ENCODE measurements at regions of chr3 and their contacts with region 1.

Region 1: DNA sequence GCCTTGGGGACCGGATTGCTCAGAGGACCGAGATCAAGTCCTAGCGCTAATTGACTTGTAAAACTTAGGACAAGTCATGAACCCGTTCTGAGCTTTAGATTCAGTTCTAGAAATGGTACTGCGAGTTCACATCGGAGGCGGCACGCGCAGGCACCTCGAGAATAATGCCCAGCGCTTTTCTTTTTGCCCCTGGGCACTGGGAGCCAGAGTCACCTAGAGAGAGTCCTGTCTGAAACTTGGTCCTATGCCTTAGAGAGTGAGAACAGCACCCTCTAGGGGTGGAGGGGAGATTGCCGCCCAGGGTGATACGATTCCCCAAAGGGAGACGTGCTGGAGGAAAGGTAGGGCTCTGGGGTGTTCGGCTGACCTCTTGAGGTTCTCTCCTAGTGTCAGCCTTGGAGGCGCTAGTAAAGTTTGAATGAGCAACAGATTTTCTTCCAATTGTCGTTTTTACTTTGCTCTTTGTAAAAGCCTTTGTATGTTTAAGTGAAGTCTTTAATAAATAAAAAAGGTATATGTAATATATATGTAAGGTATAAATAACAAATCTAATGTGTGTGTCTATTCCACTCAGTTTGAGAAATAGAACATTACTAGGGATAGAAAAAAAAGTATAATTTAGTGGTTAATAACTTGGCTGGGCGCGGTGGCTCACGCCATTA is 826 bp downstream of the EEF1AKMT4 start:
- DNase-seq: peak; percentile 90
- ATAC-seq: peak; percentile 81
- H3K4me3 ChIP-seq: peak overlapping the region; percentile 76 to 89 (median 80)
- H3K27ac ChIP-seq: peak overlapping the region; percentile 93
- H3K4me1 ChIP-seq: peaks cover 20% of the 10 kb centered on the region
- H3K27me3 ChIP-seq: peaks cover 0 to 4% of the 10 kb centered on the region in 2 experiments; a peak in 1 of 5 replicates
- CTCF ChIP-seq: peak; percentile 92
- EP300 ChIP-seq: no peak
- POLR2A ChIP-seq: no peak
- RAD21 ChIP-seq: peak; percentile 40

Region 2: DNA sequence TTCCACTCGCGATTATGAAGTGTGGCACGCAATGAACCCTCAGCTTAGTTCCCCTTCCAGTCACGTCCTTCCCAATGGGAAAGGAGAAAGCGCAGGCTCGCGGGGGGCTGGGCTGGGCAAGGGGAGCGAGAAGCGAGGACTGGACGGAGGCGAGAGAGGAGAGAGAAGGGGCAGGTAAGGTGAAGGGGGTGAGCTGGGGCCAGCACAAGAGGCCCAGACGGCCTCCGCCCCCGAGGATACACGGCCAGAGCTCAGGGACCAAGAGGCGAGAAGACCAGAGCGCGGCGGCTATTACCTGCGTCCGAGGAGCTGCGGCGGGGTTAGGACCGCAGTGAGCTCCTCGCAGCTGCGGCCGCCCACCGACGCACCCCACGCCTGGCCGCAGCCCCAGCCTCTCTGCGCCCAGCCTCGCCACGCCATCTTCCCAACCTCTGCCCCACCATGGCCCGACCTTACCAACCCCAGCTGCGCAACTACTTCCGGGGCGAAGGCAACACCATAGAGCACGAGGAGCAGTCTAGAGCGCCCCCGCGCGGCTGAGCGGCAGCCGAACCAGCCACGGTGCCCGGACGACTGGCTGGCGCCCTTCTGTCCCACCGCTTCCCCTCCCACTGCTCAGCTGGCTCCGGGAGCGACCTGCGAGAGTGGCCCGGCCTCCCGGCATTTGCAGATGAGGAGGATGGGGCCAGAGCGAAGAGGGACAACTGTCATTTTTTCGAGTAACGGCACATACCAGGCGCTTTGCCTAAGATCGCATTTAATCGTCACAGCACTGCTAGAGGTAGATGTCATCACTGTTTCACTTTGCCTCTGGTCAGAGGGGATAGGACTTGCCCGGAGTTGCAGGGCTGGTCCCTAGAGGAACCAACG is 365.6 kb before region 1 on chr3 and contains the start of gene PARL:
- CTCF ChIA-PET with region 1: no interaction called
- POLR2A ChIA-PET with region 1: interaction called, 5 read pairs
- in situ Hi-C with region 1: no loop called
- intact Hi-C with region 1: loop called (anchors 5 kb)
- DNase-seq: peak; percentile 91
- ATAC-seq: peak; percentile 99
- H3K4me3 ChIP-seq: peak within 1 kb of the TSS; percentile 84 to 89 (median 84)
- H3K27ac ChIP-seq: peak within 1 kb of the TSS; percentile 71
- H3K4me1 ChIP-seq: peaks cover 22% of the 10 kb centered on the region; the same call in 1 of the 2 replicates
- H3K27me3 ChIP-seq: no peaks in the 10 kb centered on the region; a peak in 1 of 5 replicates
- CTCF ChIP-seq: peak; percentile 99
- EP300 ChIP-seq: peak in 1 of 2 experiments; percentile 61; a peak in 1 of 4 replicates
- POLR2A ChIP-seq: peak; percentile 90 to 94
- RAD21 ChIP-seq: peak; percentile 82
- total RNA-seq, gene PARL: 58.6 and 60.5 TPM in 2 replicates

Region 3: GRCh38 chr3:184017672-184018423 is 232.4 kb before region 1 on chr3 and contains the start of gene ABCC5:
- CTCF ChIA-PET with region 1: no interaction called
- POLR2A ChIA-PET with region 1: no interaction called
- in situ Hi-C with region 1: no loop called
- intact Hi-C with region 1: loop called (anchors 10 kb)
- DNase-seq: peak; percentile 85
- ATAC-seq: peak; percentile 99
- H3K4me3 ChIP-seq: peak within 1 kb of the TSS; percentile 73 to 97 (median 79)
- H3K27ac ChIP-seq: peak within 1 kb of the TSS; percentile 30
- H3K4me1 ChIP-seq: peaks cover 32% of the 10 kb centered on the region
- H3K27me3 ChIP-seq: no peaks in the 10 kb centered on the region
- CTCF ChIP-seq: peak; percentile 42; the same call in 1 of the 2 replicates
- EP300 ChIP-seq: no peak
- POLR2A ChIP-seq: peak; percentile 31 to 89; a peak in 2 of 4 replicates
- RAD21 ChIP-seq: 0 out of 2 replicates have a peak, but pooled peaks have one; percentile 1
- total RNA-seq, gene ABCC5: 7.8 and 12.7 TPM in 2 replicates

Region 4: GRCh38 chr3:184154885-184155643 is 95.2 kb before region 1 on chr3 and contains the start of gene DVL3:
- CTCF ChIA-PET with region 1: no interaction called
- POLR2A ChIA-PET with region 1: no interaction called
- in situ Hi-C with region 1: loop called (anchors 5 kb)
- intact Hi-C with region 1: loop called (anchors 2 kb)
- DNase-seq: peak; percentile 50
- ATAC-seq: peak; percentile 68
- H3K4me3 ChIP-seq: peak within 1 kb of the TSS; percentile 77 to 100 (median 99)
- H3K27ac ChIP-seq: peak within 1 kb of the TSS; percentile 96
- H3K4me1 ChIP-seq: peaks cover 37% of the 10 kb centered on the region
- H3K27me3 ChIP-seq: no peaks in the 10 kb centered on the region; a peak in 1 of 5 replicates
- CTCF ChIP-seq: no peak; the same call in 1 of the 2 replicates
- EP300 ChIP-seq: no peak
- POLR2A ChIP-seq: peak in 1 of 2 experiments; percentile 60; a peak in 2 of 4 replicates
- RAD21 ChIP-seq: no peak
- total RNA-seq, gene DVL3: 25.4 and 29.0 TPM in 2 replicates

Region 5: GRCh38 chr3:184209146-184209923 is 41.0 kb before region 1 on chr3:
- CTCF ChIA-PET with region 1: no interaction called
- POLR2A ChIA-PET with region 1: no interaction called
- in situ Hi-C with region 1: no loop called
- intact Hi-C with region 1: no loop called
- DNase-seq: no peak
- ATAC-seq: no peak
- H3K4me3 ChIP-seq: no peak overlapping the region
- H3K27ac ChIP-seq: no peak overlapping the region
- H3K4me1 ChIP-seq: no peaks in the 10 kb centered on the region
- H3K27me3 ChIP-seq: peaks cover 7 to 23% of the 10 kb centered on the region in 2 experiments; a peak in 4 of 5 replicates
- CTCF ChIP-seq: no peak
- EP300 ChIP-seq: no peak
- POLR2A ChIP-seq: no peak
- RAD21 ChIP-seq: no peak

Region 6: DNA sequence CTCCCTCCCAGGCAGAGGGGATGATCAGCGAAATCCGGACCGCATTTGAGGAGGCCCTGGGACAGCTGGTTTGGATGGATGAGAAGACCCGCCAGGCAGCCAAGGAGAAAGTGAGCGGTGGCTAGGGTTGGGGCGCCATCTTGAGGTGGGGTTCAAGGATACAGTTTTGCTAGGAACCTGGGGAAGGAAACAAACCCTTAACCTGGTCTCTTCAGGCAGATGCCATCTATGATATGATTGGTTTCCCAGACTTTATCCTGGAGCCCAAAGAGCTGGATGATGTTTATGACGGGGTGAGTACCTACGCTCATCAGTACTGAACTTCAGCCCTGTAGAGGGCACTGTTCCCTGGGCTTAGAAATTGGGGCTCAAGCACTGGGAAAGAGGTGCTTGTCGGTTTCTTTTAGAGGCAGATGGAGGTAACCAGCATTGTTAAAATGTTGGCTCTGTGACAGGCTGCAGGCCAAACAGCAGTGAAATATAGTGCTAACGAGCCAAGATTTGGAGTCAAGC is 39.2 kb after region 1 on chr3:
- CTCF ChIA-PET with region 1: no interaction called
- POLR2A ChIA-PET with region 1: no interaction called
- in situ Hi-C with region 1: no loop called
- intact Hi-C with region 1: loop called (anchors 1 kb)
- DNase-seq: no peak
- ATAC-seq: peak; percentile 34
- H3K4me3 ChIP-seq: no peak overlapping the region
- H3K27ac ChIP-seq: no peak overlapping the region
- H3K4me1 ChIP-seq: peaks cover 44% of the 10 kb centered on the region
- H3K27me3 ChIP-seq: peaks cover 3 to 24% of the 10 kb centered on the region in 2 experiments; a peak in 3 of 5 replicates
- CTCF ChIP-seq: peak; percentile 89
- EP300 ChIP-seq: no peak
- POLR2A ChIP-seq: no peak
- RAD21 ChIP-seq: peak; percentile 74

Region 7: GRCh38 chr3:184443380-184443779 is 193.1 kb after region 1 on chr3:
- CTCF ChIA-PET with region 1: no interaction called
- POLR2A ChIA-PET with region 1: no interaction called
- in situ Hi-C with region 1: no loop called
- intact Hi-C with region 1: no loop called
- DNase-seq: no peak
- ATAC-seq: no peak
- H3K4me3 ChIP-seq: no peak overlapping the region
- H3K27ac ChIP-seq: no peak overlapping the region
- H3K4me1 ChIP-seq: peaks cover 6% of the 10 kb centered on the region; the same call in 1 of the 2 replicates
- H3K27me3 ChIP-seq: no peaks in the 10 kb centered on the region
- CTCF ChIP-seq: no peak
- EP300 ChIP-seq: no peak
- POLR2A ChIP-seq: no peak
- RAD21 ChIP-seq: no peak

Measured in HepG2 (cell line).